ENCODE measurements at regions of chr1 and their contacts with region 1.

Region 1: DNA sequence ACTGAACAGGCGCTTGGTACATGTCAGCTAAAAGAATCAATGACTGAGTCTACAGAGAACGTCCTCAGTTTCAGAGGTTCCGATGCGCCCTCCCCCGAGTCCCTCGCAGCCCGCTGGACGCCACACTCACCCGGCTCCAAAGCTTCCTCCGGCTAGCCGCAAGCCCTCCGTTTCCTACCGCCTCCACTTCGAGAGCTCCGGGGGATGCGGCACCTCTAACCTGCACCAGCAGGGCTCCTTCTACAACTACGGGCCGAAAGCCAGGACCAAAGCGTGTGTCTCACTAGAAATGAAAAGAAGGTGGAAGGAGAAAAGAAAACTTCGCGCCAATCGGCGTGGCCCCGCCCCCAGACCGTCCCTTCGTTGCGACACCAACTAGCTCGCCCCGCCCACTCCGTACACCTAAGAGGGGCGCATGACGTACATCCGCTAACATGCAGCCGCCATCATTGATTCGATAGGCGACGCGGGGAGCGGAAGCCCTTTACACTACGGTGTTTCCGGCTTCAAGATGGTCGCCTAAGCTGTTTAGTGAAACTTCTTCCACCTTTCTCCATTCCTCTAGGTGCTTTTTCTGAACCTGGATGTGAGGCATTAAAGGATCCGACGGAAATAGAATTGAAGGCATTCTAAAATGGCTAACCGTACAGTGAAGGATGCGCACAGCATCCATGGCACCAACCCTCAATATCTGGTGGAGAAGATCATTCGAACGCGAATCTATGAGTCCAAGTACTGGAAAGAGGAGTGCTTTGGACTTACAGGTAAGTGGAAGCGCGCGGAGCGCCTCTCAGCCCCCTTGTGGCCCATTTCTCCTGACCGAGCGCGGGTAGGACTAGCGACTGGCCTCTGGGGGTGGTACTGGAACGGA is at the starts of genes ORC1 and PRPF38A:
- DNase-seq: peak; percentile 97
- H3K4me3 ChIP-seq: peak within 1 kb of the TSS; percentile 57 to 98 (median 83)
- H3K27ac ChIP-seq: peak within 1 kb of the TSS; percentile 98
- H3K4me1 ChIP-seq: peaks cover 14% of the 10 kb centered on the region
- H3K27me3 ChIP-seq: no peaks in the 10 kb centered on the region
- CTCF ChIP-seq: peak; percentile 60 to 75
- POLR2A ChIP-seq: peak; percentile 82
- total RNA-seq, gene ORC1: 11.0 and 12.0 TPM in 2 replicates
- total RNA-seq, gene PRPF38A: 38.4 and 42.0 TPM in 2 replicates

Region 2: DNA sequence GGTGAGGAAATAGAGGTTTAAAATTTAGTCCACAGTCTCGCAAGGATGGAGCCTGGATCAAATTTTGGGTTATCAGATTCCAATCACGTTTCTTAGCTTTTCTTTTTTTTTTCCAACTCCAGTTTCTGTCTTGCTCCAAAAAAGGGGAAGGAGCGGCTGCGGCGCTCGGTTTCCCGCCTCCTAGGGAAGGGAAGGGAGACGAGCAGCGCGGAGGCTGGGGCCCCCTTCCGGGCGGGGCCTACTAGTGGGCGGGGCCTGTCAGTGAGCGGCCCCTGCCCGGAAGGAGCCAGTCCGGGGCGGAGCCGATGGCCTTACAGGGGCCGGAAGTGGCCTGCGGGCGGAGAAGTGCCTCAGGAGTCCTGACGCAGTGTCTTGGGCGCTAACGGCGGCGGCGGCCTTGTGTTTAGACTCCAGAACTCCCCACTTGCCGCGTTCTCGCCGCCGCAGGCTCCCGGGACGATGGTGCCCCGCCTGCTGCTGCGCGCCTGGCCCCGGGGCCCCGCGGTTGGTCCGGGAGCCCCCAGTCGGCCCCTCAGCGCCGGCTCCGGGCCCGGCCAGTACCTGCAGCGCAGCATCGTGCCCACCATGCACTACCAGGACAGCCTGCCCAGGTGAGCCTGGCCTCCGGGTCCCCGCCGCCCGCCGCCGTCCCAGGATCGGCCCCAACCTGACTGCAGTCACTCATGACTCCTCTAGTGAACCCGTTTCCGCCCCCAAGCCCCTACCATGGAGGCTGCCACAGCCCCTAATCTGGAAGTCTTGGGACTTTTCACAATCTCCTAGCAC is 792.3 kb after region 1 on chr1 and contains the start of gene CPT2:
- CTCF ChIA-PET with region 1: no interaction called
- POLR2A ChIA-PET with region 1: no interaction called
- dilution Hi-C with region 1: no loop called
- intact Hi-C with region 1: loop called (anchors 10 kb)
- DNase-seq: peak; percentile 79
- H3K4me3 ChIP-seq: peak within 1 kb of the TSS; percentile 63 to 92 (median 77)
- H3K27ac ChIP-seq: peak within 1 kb of the TSS; percentile 74
- H3K4me1 ChIP-seq: peaks cover 13% of the 10 kb centered on the region
- H3K27me3 ChIP-seq: no peaks in the 10 kb centered on the region
- CTCF ChIP-seq: peak in 1 of 2 donors; percentile 3
- POLR2A ChIP-seq: peak; percentile 93
- total RNA-seq, gene CPT2: 10.4 and 11.6 TPM in 2 replicates

Measured in endothelial cell of umbilical vein (primary cell).